ENCODE measurements at regions of chr19 and their contacts with region 1.

Region 1: DNA sequence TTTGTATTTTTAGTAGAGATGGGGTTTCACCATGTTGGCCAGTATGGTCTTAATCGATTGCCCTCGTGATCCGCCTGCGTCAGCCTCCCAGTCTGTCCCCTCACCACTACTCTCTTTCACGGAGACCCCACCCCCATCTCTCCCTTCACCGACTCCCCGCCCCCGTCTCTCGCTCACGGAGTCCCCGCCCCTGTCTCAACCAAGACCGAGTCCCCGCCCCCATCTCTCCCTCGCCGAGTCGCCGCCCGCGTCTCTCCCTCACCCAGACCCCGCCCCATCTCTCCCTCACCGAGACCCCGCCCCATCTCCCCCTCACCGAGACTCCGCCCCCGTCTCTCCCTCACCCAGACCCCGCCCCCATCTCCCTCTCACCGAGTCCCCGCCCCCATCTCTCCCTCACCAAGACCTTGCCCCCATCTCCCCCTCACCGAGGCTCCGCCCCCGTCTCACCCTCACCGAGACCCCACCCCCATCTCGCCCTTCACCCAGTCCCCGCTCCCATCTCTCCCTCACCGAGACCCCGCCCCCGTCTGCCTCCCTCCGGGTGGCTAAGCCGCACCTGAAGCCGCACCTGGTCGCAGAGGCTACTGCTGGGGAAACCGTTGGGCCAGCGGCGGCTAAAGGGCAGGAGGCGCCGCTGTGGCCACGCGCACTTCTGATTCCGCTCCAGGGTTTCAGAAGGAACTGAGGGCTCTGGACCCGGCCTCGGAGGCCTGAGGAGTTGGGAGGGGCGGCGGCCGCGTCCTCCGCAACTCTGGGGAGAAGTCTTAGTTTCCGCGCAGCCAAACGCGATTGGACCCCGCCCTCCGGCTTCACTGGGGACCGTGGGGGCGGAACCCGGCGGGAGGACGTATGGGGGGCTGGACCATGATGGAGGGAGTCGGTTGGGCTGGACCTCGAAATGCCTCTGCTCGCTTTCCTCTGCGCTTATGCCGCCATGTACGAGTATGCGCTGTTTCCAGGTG is 17.1 kb upstream of the ZNF846 start:
- DNase-seq: peak; percentile 86
- ATAC-seq: peak; percentile 84
- H3K4me3 Mint-ChIP-seq: peak overlapping the region; percentile 91
- H3K27ac Mint-ChIP-seq: peak overlapping the region; percentile 96
- H3K4me1 Mint-ChIP-seq: peaks cover 15% of the 10 kb centered on the region
- H3K27me3 Mint-ChIP-seq: no peaks in the 10 kb centered on the region
- CTCF ChIP-seq: no peak

Region 2: DNA sequence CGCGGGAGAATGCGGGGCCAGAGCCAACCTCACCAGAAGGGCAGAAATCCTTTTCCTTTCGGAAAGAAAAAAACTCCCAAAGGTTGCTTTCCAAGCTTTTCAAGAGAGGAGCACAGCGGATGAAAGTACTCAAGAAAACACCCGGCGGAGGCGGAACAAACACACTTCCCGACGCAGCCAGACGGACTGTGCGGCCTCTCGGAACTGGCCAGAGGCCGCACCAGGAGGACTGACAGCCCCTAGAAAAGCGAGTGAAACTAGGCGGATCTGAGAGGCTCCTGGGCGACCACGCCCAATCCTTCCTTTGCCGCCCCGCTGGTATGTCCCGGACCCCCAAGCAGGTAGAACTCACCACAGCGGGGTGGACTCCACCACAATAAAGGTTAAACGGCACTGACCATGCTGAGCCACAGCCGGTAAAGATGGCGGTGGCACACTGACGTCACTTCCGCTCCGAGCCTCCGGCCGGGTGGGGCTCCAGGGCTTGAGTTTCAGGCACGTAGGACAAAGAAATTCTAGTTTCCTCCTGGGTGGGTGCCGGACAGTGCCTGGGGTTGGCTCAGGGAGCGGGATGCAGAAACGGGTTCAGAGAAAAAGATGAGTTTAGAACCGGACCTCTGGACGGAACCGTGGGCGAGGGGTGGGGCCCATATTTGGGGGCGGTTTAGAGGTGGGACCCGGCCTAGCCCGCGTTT is 110.8 kb before region 1 on chr19 and contains the start of gene ZNF562:
- CTCF ChIA-PET with region 1: no interaction called
- POLR2A ChIA-PET with region 1: no interaction called
- intact Hi-C with region 1: loop called (anchors 2 kb)
- DNase-seq: peak; percentile 78
- ATAC-seq: peak; percentile 91
- H3K4me3 Mint-ChIP-seq: peak within 1 kb of the TSS; percentile 99
- H3K27ac Mint-ChIP-seq: peak within 1 kb of the TSS; percentile 98
- H3K4me1 Mint-ChIP-seq: peaks cover 29% of the 10 kb centered on the region
- H3K27me3 Mint-ChIP-seq: no peaks in the 10 kb centered on the region
- CTCF ChIP-seq: no peak
- total RNA-seq, gene ZNF562: 31.6 and 32.2 TPM in 2 replicates

Region 3: DNA sequence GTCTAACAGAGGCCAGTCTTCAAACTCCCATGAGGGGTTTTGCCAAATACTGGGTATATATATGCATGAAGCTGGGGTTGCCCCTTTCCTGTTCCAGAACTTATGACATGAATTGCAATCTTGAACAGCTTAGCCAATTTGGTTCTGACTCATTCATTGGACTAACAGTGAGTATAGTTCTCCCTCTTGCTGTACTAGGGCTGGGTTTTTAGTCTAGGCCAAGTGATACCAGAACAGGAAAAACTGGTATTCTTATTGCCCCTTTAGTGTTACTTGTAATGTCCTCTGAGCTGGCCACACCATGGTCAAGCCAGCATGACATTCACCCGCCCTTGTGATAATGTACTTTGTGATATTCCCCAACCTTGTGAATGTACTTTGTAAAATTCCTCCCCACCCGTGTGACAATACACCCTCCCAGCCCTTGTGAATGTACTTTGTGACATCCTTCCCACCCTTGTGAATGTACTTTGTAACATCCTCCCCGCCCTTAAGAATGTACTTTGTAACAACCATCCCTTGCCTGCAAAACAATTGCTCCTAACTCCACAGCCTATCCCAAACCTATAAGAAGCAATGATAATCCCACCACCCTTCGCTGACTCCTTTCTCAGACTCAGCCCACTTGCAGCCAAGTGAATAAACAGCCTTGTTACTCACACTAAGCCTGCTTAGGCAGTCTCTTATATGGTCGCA is 44.0 kb before region 1 on chr19:
- CTCF ChIA-PET with region 1: no interaction called
- POLR2A ChIA-PET with region 1: no interaction called
- intact Hi-C with region 1: no loop called
- DNase-seq: no peak
- ATAC-seq: no peak
- H3K4me3 Mint-ChIP-seq: no peak overlapping the region
- H3K27ac Mint-ChIP-seq: no peak overlapping the region
- H3K4me1 Mint-ChIP-seq: no peaks in the 10 kb centered on the region
- H3K27me3 Mint-ChIP-seq: no peaks in the 10 kb centered on the region
- CTCF ChIP-seq: no peak

Region 4: GRCh38 chr19:9834726-9835506 is 49.3 kb after region 1 on chr19 and contains the start of gene PIN1:
- CTCF ChIA-PET with region 1: no interaction called
- POLR2A ChIA-PET with region 1: no interaction called
- intact Hi-C with region 1: loop called (anchors 2 kb)
- DNase-seq: peak; percentile 98
- ATAC-seq: peak; percentile 95
- H3K4me3 Mint-ChIP-seq: peak within 1 kb of the TSS; percentile 93
- H3K27ac Mint-ChIP-seq: peak within 1 kb of the TSS; percentile 94
- H3K4me1 Mint-ChIP-seq: peaks cover 12% of the 10 kb centered on the region
- H3K27me3 Mint-ChIP-seq: no peaks in the 10 kb centered on the region
- CTCF ChIP-seq: no peak
- total RNA-seq, gene PIN1: 57.1 and 66.0 TPM in 2 replicates